AG04449 (cell line): ENCODE measurements at regions of chr20 and their contacts with region 1.

Region 1: DNA sequence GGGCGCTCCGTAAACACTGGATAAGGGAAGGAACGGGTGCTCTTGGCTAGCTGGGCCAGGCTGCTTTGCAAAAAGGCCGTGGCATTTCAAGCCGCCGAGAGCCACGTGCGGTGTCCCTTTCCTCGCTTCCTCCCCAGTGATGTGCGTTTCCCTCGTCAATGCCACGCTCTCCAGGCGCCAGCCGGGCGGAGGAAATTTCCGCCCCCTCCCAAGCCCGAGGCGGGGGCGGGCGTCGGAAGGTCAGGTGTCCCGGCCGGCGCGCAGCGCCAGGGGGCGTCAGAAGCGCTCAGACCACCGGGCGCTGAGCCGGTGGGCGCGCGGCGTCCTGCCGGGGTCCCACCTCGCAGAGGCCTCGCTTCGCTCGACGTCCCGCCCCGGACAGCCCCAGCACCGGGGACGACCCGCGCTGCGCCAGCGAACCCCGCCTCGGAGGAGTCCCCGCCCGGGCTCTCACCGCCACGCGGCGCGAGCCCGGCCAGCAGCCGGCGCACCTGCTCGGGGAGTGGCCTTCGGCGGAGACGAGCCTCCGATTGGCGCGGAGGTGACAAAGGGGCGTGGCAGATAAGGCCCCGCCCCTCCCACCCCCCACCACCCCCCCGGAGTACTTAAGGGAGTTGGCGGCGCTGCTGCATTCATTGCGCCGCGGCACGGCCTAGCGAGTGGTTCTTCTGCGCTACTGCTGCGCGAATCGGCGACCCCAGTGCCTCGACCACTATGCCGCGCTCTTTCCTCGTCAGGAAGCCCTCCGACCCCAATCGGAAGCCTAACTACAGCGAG is at the start of gene SNAI1:
- DNase-seq: no peak
- H3K4me3 ChIP-seq: peak within 1 kb of the TSS; percentile 86
- CTCF ChIP-seq: peak; percentile 50

Region 2: GRCh38 chr20:49942301-49942700 is 40.2 kb before region 1 on chr20:
- CTCF ChIA-PET with region 1: interaction called, 11 read pairs
- POLR2A ChIA-PET with region 1: no interaction called
- DNase-seq: no peak
- H3K4me3 ChIP-seq: no peak overlapping the region
- CTCF ChIP-seq: no peak

Region 3: DNA sequence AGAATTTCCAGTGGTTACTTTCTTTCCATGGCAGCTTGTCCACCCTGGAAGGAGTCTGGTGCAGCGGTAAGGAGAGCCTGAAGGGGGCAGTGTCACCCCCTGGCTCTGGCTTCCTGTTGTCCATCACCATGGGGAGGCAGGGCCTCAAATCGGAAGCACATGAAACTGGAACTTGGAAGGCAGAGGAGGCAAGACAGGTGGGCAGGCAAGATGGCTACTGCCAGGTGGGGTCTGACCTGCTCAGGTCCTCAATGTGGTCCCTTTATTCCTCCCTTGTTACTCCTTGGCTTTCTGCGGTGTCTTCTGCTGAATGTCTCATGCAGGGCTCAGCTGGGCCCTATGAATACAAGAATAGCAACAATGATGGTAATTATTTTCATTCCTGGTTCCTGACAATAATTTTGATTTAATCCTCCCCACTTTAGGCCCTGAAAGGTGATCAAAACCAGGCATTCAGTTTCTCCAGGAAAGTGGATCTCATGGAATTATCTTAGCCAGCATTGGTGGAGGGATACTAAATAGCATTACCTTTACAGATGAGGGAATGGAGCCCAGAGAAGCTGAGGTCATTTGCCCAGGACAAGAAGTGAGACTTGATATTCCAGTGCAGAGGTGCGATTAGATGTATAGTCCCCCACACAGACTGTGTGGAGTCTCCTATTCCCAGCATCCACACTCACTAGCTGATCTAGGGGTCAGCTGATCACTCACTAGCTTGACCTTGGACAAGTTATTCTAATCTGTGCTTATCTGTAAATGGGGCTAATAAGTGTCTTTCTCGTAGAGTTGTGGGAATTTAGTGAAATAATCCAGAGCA is 17.4 kb before region 1 on chr20:
- CTCF ChIA-PET with region 1: interaction called, 147 read pairs
- POLR2A ChIA-PET with region 1: no interaction called
- DNase-seq: no peak
- H3K4me3 ChIP-seq: no peak overlapping the region
- CTCF ChIP-seq: peak; percentile 57

Region 4: DNA sequence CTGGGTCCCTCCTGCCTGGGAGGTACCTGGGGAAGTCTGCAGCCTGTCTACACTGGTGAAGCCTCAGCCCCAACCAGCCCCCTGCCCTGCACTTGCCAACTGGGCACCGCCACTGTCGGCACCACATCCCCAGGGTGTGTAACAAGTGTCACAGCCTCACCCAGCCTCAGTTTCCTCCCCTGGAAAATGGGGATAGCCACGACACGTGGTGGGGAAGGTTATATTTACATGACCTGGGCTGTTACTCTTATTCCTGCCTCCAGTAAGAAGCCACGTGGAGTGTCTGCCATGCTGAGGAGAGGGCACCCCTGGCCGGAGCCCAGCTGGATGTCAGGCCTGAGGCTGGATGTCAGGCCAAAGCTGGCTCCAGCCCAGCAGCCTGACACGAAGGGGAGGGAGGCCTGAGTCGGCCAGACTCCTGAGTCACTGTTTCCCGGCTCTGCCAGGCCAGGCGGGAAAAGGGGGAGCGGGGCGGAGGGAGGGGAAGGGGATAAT is 45.1 kb after region 1 on chr20:
- CTCF ChIA-PET with region 1: interaction called, 12 read pairs
- POLR2A ChIA-PET with region 1: interaction called, 10 read pairs
- DNase-seq: no peak
- H3K4me3 ChIP-seq: no peak overlapping the region
- CTCF ChIP-seq: no peak

Region 5: DNA sequence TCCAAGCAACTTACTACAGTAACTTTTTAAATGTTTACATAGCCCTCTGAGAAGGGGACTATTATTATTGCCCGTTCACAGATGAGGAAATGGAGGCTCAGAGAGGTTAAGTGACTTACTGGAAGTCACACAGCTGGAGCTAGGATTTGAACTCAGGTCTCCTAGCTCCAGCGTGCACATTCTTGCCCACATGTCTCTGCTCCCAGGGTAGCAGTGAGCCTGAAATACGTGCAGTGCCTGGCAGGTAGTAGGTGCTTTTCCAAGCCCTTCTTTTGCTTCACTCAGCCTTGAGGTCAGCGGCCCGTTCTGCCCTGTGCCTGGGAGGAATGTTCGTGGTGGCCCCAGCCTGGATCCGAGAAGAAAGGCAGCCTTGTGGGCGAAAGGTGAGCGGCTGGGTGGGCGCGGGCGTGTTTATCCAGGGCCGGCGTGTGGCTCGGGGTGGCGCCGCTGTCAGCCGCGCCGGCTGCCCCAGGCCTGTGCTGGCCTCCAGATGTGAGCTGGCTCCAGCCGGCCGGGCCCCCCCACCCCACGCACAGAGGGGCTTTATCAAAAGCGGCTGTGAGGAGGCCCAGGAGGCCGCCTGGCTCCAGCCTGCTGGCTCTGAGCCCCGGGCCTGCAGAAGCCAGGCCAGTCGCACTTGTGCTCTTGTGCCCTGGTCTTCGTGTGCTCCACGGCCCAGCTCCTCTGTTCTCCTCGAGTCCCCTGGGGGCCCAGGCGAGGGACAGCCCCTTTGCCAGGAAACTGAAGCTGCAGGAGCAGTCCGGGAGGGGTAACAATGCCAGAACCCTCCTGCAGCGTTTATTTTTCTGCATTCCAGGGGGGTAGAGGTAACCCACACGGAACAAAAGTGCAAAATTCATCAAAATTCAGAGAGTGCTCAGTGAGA is 72.3 kb after region 1 on chr20:
- CTCF ChIA-PET with region 1: interaction called, 984 read pairs
- POLR2A ChIA-PET with region 1: interaction called, 5 read pairs
- DNase-seq: no peak
- H3K4me3 ChIP-seq: no peak overlapping the region; the same call in 1 of the 2 replicates
- CTCF ChIP-seq: no peak

Region 6: GRCh38 chr20:50085452-50086365 is 103.2 kb after region 1 on chr20:
- CTCF ChIA-PET with region 1: interaction called, 118 read pairs
- POLR2A ChIA-PET with region 1: no interaction called
- DNase-seq: no peak
- H3K4me3 ChIP-seq: no peak overlapping the region
- CTCF ChIP-seq: peak; percentile 65

Region 7: GRCh38 chr20:50165684-50166554 is 183.4 kb after region 1 on chr20:
- CTCF ChIA-PET with region 1: interaction called, 96 read pairs
- POLR2A ChIA-PET with region 1: interaction called, 3 read pairs
- DNase-seq: peak; percentile 99
- H3K4me3 ChIP-seq: peak overlapping the region; percentile 67
- CTCF ChIP-seq: no peak